Activated CD4-positive, alpha-beta memory T cell treated with anti-CD3 and anti-CD28 coated beads for 36 hours (primary cell): ENCODE measurements at regions of chr21 and their contacts with region 1.

Region 1: DNA sequence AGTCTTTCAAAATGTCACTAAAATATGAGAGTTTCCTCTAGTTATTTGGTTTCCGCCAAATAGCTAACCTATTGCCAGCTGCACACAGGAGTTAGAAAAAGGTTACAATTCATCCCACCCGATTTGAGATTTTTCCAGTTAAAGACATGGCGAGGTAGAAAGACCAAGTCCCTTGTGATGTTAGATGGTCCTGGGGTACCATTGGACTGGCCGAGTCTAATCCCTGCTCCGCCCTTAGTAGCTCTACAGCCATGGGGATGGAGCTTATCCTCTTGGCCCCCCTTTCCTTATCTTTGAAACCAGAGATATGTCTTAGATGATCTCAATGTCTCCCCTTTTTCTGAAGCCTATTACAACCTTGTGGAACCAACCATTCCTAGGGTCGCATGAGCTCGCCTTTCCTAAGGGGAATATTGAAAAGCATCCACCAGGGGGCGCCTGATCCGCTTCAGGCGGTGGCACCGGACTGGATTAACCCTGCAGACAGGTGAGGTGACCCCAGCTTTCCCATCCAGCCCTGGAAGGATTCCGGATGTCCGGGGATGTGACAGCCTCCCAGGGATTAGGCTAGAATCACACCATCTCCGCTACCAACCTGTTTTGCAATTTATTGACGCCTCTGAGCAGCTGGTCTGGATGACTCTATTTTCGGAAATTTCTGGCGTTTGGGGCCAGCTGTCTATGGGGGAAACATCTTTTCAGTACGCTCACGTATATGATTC is 68.3 kb upstream of the SIM2 start:
- DNase-seq: peak; percentile 70
- H3K4me3 Mint-ChIP-seq: no peak overlapping the region
- H3K27ac Mint-ChIP-seq: no peak overlapping the region
- H3K4me1 Mint-ChIP-seq: no peaks in the 10 kb centered on the region
- H3K27me3 Mint-ChIP-seq: peaks cover 13% of the 10 kb centered on the region

Region 2: DNA sequence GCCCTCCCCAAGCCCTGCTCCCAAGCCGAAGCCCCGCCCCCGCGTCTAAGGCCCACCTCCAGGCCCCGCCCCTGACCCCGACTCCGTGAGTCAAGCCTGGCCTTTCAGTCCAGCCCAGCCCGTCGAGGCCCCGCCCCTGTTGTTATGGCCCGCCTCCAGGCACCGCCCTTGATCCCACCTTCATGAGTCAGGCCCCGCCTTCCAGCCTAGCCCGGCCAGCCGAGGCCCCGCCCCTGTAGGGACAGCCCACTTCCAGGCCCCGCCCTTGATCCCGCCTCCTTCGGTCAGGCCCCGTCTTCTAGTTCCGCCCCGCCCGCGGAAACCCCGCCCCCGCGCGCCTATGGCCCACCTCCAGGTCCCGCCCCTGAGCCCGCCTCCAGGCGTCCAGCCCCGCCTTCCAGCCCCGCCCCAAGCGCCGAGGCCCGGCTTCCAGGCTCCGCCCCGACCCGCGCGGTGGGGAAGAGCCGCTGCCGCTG is 474.3 kb before region 1 on chr21:
- CTCF ChIA-PET with region 1: no interaction called
- POLR2A ChIA-PET with region 1: no interaction called
- intact Hi-C with region 1: no loop called
- DNase-seq: peak; percentile 100
- H3K4me3 Mint-ChIP-seq: peak overlapping the region; percentile 82
- H3K27ac Mint-ChIP-seq: no peak overlapping the region
- H3K4me1 Mint-ChIP-seq: peaks cover 25% of the 10 kb centered on the region
- H3K27me3 Mint-ChIP-seq: no peaks in the 10 kb centered on the region

Region 3: DNA sequence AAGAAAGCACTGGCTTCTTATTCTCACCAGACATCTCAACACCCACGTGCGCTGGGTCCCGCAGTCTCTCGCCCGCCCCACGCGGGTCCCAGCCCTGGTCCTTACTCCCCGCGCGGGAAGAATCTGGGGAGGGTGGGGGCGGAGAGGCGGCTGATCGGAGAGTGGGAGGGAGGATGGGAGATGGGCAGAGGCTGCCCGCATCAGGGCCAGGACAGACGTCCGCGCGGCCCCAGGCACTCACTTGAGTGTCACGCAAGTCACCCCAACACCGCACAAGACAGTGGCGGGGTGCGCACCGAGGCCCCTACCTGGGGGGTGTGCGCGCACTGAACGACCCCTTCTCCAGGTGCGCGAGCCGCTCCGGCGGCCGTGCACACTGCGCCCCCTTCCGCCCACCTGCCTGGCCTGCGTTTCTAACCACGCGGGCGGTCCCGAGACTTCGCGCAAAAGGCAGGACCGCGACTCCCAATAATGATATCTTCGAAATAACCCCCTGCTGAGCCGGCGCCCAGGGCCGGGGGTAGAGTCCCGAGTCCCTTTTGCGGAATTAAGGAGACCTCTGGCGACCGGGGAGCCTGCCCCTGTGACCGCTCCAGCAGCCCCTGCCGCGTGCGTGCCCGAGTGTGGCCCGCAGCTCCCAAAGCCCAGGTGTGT is 62.3 kb after region 1 on chr21:
- CTCF ChIA-PET with region 1: interaction called, 12 read pairs
- POLR2A ChIA-PET with region 1: no interaction called
- intact Hi-C with region 1: no loop called
- DNase-seq: no peak
- H3K4me3 Mint-ChIP-seq: no peak overlapping the region
- H3K27ac Mint-ChIP-seq: no peak overlapping the region
- H3K4me1 Mint-ChIP-seq: peaks cover 16% of the 10 kb centered on the region
- H3K27me3 Mint-ChIP-seq: peaks cover 81% of the 10 kb centered on the region

Region 4: GRCh38 chr21:36854391-36854790 is 223.7 kb after region 1 on chr21:
- CTCF ChIA-PET with region 1: interaction called, 15 read pairs
- POLR2A ChIA-PET with region 1: no interaction called
- intact Hi-C with region 1: no loop called
- DNase-seq: peak; percentile 33
- H3K4me3 Mint-ChIP-seq: no peak overlapping the region
- H3K27ac Mint-ChIP-seq: no peak overlapping the region
- H3K4me1 Mint-ChIP-seq: peaks cover 35% of the 10 kb centered on the region
- H3K27me3 Mint-ChIP-seq: no peaks in the 10 kb centered on the region

Region 5: GRCh38 chr21:36917471-36918158 is 287.0 kb after region 1 on chr21:
- CTCF ChIA-PET with region 1: interaction called, 10 read pairs
- POLR2A ChIA-PET with region 1: no interaction called
- intact Hi-C with region 1: no loop called
- DNase-seq: peak; percentile 26
- H3K4me3 Mint-ChIP-seq: no peak overlapping the region
- H3K27ac Mint-ChIP-seq: no peak overlapping the region
- H3K4me1 Mint-ChIP-seq: peaks cover 20% of the 10 kb centered on the region
- H3K27me3 Mint-ChIP-seq: no peaks in the 10 kb centered on the region

Region 6: DNA sequence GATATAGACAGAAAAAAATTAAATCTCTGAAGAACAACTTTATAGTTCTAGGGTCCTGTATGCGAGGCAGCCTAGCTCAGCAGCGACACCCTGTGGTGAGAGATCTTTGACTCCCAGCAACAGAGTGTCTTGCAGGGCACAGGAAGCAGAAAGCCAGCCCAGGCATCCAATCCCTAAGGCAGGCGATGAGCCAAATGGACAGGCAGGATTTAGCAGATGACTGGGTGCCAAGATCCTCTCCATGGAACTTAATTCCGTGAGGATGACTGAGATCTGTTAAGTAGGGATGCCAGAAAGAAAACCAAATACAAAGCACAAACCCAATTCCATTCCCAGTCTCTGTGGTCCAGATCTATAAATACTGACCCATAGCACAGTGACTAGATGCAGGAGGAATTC is 297.1 kb after region 1 on chr21:
- CTCF ChIA-PET with region 1: interaction called, 97 read pairs
- POLR2A ChIA-PET with region 1: no interaction called
- intact Hi-C with region 1: loop called (anchors 2 kb)
- DNase-seq: peak; percentile 84
- H3K4me3 Mint-ChIP-seq: no peak overlapping the region
- H3K27ac Mint-ChIP-seq: no peak overlapping the region
- H3K4me1 Mint-ChIP-seq: peaks cover 7% of the 10 kb centered on the region
- H3K27me3 Mint-ChIP-seq: no peaks in the 10 kb centered on the region

Region 7: DNA sequence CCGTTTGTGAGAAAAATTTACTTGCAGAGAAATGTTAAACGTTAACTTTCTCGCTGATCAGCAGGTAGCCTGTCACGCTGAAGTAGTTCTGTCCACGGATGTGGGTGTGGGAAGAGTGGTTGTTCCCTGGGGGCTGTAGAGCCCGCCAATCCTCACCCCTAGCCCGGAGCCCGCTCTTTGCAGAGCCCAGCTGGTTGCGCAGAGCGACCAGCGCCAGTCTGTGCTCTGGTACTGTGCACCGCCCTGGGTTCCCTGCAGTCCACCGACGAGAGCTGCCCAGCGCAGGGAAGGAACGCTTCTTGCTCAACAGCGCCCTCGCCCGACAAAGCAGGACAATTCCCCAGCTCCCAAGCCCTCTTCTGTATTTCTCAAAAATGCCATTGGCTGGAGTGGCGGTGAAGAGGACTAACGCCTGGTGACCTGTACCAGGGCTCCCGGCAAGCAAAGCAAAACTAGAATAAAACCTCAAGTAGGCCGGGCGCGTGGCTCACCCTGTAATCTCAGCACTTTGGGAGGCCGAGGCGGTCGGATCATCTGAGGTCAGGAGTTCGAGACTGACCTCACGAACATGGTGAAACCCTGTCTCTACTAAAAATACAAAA is 379.2 kb after region 1 on chr21:
- CTCF ChIA-PET with region 1: interaction called, 14 read pairs
- POLR2A ChIA-PET with region 1: no interaction called
- intact Hi-C with region 1: no loop called
- DNase-seq: peak; percentile 88
- H3K4me3 Mint-ChIP-seq: peak overlapping the region; percentile 53
- H3K27ac Mint-ChIP-seq: peak overlapping the region; percentile 15
- H3K4me1 Mint-ChIP-seq: peaks cover 16% of the 10 kb centered on the region
- H3K27me3 Mint-ChIP-seq: peaks cover 37% of the 10 kb centered on the region